ENCODE measurements at regions of chr19 and their contacts with region 1.

Region 1: GRCh38 chr19:1780272-1780958 is 27.1 kb downstream of the ONECUT3 start:
- DNase-seq: no peak
- ATAC-seq: peak; percentile 80
- H3K4me3 ChIP-seq: no peak overlapping the region
- H3K27ac ChIP-seq: no peak overlapping the region; the same call in 1 of the 2 replicates
- H3K4me1 ChIP-seq: peaks cover 18% of the 10 kb centered on the region
- H3K27me3 ChIP-seq: no peaks in the 10 kb centered on the region
- CTCF ChIP-seq: peak; percentile 52

Region 2: DNA sequence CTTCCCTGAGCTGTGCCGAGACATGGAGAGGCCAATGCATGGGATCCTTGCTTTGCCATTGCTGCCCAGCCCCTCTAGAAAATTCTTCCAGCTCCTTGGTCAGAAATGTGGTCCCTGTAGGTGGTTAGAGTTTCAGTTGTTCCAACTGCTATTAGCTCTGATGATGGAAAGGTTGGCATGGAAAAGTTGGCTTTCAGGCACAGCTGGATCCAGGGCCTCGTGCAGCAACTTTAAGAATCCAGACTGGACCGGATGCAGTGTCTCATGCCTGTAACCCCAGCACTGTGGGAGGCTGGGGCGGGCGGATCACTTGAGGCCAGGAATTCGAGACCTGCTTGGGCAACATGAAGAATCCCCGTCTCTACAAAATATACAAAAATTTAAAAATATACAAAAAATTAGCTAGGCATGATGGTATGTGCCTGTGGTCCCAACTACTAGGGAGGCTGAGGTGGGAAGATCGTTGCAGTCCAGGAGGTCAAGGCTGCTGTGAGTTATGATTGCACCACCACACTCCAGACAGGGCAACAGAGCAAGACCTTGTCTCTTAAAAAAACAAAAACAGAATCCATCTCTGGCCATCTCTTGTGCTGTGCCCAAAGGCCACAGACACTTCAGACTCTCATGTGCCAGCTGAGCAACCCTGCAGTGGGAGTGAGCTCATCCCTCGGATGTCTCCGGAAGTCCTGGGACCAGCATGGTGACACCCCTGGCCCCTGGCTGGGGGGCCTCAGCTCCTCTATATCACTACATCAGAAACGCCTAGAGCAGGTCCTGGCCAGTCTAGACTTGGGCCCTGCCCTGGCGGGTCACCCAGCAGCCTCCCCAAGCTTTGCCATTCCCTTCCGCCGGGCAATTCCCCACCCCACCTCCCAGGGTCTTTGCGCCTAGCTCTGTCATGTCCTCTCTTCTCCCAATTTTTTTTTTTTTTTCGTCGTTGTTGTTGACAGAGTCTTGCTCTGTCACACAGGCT is 229.1 kb before region 1 on chr19:
- CTCF ChIA-PET with region 1: interaction called, 14 read pairs
- POLR2A ChIA-PET with region 1: no interaction called
- in situ Hi-C with region 1: no loop called
- intact Hi-C with region 1: no loop called
- DNase-seq: no peak
- ATAC-seq: no peak
- H3K4me3 ChIP-seq: no peak overlapping the region
- H3K27ac ChIP-seq: no peak overlapping the region
- H3K4me1 ChIP-seq: no peaks in the 10 kb centered on the region
- H3K27me3 ChIP-seq: no peaks in the 10 kb centered on the region
- CTCF ChIP-seq: no peak

Region 3: DNA sequence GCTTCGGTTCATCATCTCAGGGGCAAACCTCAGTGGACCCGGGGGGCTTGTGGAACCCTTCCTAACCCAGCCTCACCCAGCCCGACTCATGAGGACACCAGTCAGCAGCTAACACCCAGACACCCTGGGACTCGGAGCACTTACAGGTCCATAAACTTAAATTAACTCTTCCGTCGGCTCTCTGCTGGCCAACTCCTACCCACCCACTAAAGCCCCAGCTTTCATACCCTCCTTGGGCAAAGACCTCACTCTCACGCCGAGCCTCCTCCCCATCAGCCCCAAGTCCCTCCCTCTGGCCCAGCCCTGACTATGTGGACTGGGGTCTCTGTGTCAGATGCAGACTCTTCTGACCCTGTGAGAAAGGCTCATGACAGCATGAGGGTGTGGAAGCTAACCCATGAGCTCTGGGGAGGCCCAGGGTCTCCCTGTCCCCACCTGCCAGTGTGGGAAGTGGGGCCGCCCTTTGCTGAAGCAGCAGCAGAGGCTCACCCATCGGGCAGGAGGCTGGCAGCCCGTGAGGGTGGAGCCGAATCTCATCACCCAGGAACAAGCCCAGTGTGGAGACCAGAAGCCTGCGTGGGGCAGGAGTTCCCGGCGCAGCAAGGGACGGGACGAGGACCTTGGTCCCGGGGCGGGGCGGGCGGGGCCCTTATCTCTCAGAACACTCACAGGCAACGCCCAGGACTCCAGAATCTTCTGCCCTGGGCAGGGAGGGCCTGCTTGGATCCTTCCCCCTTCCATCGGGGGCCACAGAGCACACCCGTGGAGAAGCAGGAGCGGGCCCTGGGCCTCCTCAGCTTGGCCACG is 147.8 kb before region 1 on chr19:
- CTCF ChIA-PET with region 1: no interaction called
- POLR2A ChIA-PET with region 1: no interaction called
- in situ Hi-C with region 1: no loop called
- intact Hi-C with region 1: no loop called
- DNase-seq: no peak
- ATAC-seq: 0 out of 2 replicates have a peak, but pooled peaks have one; percentile 8
- H3K4me3 ChIP-seq: no peak overlapping the region
- H3K27ac ChIP-seq: no peak overlapping the region
- H3K4me1 ChIP-seq: no peaks in the 10 kb centered on the region
- H3K27me3 ChIP-seq: no peaks in the 10 kb centered on the region
- CTCF ChIP-seq: no peak

Region 4: DNA sequence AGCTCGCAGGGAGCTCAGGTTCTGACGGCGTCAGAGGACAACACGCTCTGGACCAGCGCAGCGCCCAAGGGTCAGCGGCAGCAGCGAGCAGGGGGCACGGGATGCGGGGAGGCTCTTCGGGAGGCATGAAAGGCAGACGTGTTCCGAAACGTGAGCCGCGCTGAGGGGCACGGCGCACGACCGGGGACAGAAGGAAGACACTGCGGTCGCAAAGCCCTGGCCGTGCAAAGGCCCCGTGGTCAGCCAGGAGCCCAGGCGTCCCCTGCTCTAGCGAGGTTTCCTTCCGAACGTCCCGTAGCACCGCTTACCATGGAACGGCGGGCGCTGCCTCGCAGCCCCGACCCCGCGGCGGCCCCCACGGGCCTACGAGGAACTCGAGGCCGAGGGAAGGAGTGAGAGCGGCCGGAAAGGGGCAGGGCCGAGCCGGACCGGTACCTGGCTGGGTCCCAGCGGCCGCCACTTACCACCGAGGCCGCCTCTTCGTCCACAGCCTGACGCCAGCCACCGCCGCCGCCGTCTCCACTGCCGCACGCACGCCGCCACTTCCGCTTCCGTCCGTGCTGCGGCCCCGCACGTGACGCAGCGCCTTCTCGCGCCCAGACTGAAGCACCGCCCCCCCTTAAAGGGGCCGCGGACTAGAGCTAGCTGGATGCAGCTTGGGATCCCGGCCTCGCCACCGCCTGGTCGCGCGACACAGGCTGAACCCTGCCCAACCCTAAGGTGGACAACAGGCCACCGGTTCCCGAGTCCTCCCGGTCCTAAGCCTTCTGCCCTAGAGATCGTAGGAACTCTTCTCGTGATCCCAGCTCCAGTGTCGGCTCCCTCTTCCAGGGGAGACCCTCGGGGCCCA is 95.5 kb after region 1 on chr19:
- CTCF ChIA-PET with region 1: no interaction called
- POLR2A ChIA-PET with region 1: no interaction called
- in situ Hi-C with region 1: no loop called
- intact Hi-C with region 1: no loop called
- DNase-seq: no peak
- ATAC-seq: peak; percentile 94
- H3K4me3 ChIP-seq: peak overlapping the region; percentile 67 to 80
- H3K27ac ChIP-seq: peak overlapping the region; percentile 83
- H3K4me1 ChIP-seq: peaks cover 20% of the 10 kb centered on the region
- H3K27me3 ChIP-seq: no peaks in the 10 kb centered on the region
- CTCF ChIP-seq: no peak

Region 5: GRCh38 chr19:1901940-1902441 is 121.6 kb after region 1 on chr19:
- CTCF ChIA-PET with region 1: no interaction called
- POLR2A ChIA-PET with region 1: interaction called, 15 read pairs
- in situ Hi-C with region 1: no loop called
- intact Hi-C with region 1: no loop called
- DNase-seq: no peak
- ATAC-seq: no peak
- H3K4me3 ChIP-seq: no peak overlapping the region
- H3K27ac ChIP-seq: no peak overlapping the region
- H3K4me1 ChIP-seq: peaks cover 13% of the 10 kb centered on the region
- H3K27me3 ChIP-seq: no peaks in the 10 kb centered on the region
- CTCF ChIP-seq: no peak